Activated T-helper 1 cell treated with anti-CD3 and anti-CD28 coated beads, Interleukin-12 subunit alpha, Interleukin-12 subunit beta, Interleukin-2, Interleukin-4 antibody, amounts not matched to agents 30 ng/mL and 10 ng/mL and 1 ng/mL, durations not matched to agents 14 hours and 24 hours and 36 hours (primary cell): ENCODE measurements at regions of chr19 and their contacts with region 1.

Region 1: DNA sequence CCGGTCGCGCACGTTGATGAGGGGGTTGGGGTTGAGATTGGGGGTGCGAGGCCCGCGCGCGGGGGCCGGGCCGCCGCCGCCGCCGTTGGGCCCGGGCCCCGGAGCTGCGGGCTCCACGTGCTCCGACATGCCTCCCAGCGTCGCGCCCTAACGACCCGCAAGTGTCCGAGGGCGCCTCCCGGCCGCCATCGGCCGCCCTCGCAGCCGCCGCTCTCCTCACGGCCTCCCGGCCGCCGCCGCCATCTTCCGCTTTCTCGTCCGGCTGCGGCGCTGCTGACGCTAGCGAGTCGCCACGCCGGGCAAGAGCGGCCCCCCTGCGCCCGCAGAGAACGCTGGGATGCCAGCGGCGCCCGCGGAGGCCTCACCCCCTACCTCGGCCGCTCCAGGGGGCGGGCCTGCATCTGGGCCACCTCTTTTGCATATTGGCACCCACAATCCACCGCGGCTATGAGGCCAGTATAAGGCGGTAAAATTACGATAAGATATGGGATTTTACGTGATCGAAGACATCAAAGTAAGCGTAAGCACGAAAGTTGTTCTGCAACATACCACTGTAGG is at the start of gene TMEM259:
- DNase-seq: peak; percentile 96
- H3K4me3 Mint-ChIP-seq: peak within 1 kb of the TSS; percentile 95
- H3K27ac Mint-ChIP-seq: peak within 1 kb of the TSS; percentile 99
- H3K4me1 Mint-ChIP-seq: peaks cover 30% of the 10 kb centered on the region
- H3K27me3 Mint-ChIP-seq: peaks cover 2% of the 10 kb centered on the region
- total RNA-seq, gene TMEM259: 162 and 170 TPM in 2 replicates

Region 2: GRCh38 chr19:680287-681028 is 340.5 kb before region 1 on chr19:
- intact Hi-C with region 1: loop called (anchors 1 kb)
- DNase-seq: peak; percentile 95
- H3K4me3 Mint-ChIP-seq: peak overlapping the region; percentile 86
- H3K27ac Mint-ChIP-seq: peak overlapping the region; percentile 99
- H3K4me1 Mint-ChIP-seq: no peaks in the 10 kb centered on the region
- H3K27me3 Mint-ChIP-seq: peaks cover 5% of the 10 kb centered on the region

Region 3: DNA sequence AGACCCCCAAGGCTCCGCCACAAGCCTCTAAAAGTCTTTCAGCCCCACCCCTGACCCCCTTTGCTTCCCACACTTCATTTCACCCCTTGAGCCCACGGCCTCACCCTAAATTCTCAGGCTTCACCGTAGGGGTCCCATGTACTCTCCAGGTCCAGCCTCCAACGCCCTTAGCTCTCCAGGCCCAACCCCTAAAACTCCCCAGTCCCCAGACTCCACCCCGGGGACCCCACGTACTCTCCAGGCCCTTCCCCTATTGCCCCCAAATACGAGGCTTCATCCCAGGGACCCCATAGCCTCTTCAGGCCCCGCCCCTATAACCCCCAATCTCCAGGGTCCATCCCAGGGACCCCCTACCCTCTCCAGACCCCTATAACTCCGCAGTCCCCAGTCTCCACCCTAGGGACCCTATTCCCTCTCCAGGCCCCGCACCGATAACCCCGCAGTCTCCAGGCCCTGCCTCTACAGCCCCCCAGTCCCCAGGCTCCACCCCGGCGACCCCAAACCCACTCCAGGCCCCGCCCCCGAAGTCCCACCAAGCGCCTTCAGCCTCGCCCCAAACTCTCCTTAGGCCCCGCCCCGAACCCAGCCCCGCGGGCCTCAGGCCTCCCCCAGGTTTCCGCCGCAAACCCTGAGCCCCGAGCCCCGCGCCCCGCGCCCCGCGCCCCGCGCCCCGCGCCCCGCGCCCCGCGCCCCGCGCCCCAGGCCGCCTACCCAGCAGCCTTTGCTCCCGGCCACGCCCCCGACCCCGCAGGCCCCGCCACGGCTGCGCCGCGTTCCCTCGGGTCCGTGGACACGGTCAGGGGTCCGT is 128.5 kb before region 1 on chr19:
- intact Hi-C with region 1: loop called (anchors 1 kb)
- DNase-seq: no peak
- H3K4me3 Mint-ChIP-seq: peak overlapping the region; percentile 94
- H3K27ac Mint-ChIP-seq: peak overlapping the region; percentile 82
- H3K4me1 Mint-ChIP-seq: peaks cover 8% of the 10 kb centered on the region
- H3K27me3 Mint-ChIP-seq: no peaks in the 10 kb centered on the region

Region 4: GRCh38 chr19:1039646-1040475 is 18.9 kb after region 1 on chr19 and contains the start of gene ABCA7:
- intact Hi-C with region 1: loop called (anchors 1 kb)
- DNase-seq: peak; percentile 100
- H3K4me3 Mint-ChIP-seq: peak within 1 kb of the TSS; percentile 97
- H3K27ac Mint-ChIP-seq: peak within 1 kb of the TSS; percentile 86
- H3K4me1 Mint-ChIP-seq: peaks cover 51% of the 10 kb centered on the region
- H3K27me3 Mint-ChIP-seq: no peaks in the 10 kb centered on the region
- total RNA-seq, gene ABCA7: 15.8 and 18.3 TPM in 2 replicates

Region 5: DNA sequence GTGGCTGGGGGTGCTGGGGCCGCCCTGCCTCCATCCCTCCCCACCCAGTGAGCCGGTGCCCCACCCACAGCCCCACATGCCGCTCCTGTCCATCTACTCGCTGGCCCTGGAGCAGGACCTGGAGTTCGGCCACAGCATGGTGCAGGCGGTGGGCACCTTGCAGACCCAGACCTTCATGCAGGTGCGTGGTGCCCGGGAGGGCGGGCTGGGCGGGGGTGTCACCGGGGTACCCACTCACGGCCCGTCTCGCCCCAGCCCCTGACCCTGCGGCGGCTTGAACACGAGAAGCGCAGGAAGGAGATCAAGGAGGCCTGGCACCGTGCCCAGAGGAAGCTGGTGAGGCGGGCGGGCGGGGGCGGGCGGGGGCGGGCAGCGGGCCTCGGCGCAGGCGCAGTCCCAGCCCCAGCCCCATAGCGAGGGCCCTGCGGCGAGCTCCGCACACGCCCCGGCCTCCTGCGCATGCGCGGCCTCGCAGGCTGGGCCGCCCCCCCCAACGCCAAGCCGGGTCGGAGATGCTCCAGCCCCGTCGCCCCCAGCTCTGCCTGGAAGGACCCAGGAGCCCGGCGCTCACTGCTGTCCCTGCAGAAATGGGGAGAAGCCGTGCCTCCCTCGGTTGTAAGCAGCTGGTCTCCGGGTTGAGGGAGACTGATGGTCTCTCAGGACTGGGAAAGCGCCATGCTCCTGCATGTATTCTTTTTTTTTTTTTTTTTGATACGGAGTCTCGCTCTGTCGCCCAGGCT is 53.8 kb after region 1 on chr19:
- intact Hi-C with region 1: loop called (anchors 1 kb)
- DNase-seq: peak; percentile 69
- H3K4me3 Mint-ChIP-seq: peak overlapping the region; percentile 79
- H3K27ac Mint-ChIP-seq: peak overlapping the region; percentile 90
- H3K4me1 Mint-ChIP-seq: peaks cover 35% of the 10 kb centered on the region
- H3K27me3 Mint-ChIP-seq: no peaks in the 10 kb centered on the region

Region 6: DNA sequence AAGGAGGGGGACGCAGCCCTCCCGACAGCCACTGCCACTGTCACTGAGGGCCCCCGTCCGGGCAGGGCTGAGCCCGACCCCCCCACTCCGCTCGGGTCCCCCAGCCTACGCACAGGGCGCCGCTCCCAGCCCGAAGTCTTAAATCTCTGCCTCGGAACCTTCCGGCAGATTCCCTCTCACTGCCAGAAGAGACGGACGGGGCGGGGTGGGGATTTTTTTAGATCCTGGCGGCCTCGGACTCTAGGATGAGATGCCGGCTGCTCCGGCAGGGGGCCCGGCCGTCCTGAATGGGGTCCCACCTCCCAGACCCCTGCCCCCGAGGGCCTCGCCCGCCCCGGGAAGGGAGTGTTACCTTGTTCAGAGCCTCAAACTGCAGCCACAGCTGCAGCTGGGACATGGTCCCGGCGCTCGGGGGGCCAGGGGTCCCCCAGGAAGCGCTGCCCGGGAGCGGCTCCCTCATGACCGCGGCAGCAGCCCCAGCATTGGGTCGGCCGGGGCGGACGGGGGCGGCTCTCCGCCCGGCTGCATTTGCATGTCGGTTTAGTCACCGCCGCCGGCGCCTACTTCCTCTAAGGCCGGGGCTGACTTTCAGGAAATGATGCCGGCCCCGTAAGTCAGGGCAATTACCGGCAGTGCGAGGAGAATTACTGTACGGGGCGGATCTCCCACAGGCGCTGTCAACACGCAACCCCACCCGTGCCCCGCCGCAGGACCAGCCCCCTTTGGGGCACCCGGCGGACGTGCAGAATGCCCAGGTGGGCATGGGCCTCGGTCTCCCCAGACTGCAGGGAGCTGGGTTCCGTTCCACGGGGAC is 111.0 kb after region 1 on chr19:
- intact Hi-C with region 1: loop called (anchors 1 kb)
- DNase-seq: peak; percentile 88
- H3K4me3 Mint-ChIP-seq: peak overlapping the region; percentile 89
- H3K27ac Mint-ChIP-seq: peak overlapping the region; percentile 86
- H3K4me1 Mint-ChIP-seq: peaks cover 26% of the 10 kb centered on the region
- H3K27me3 Mint-ChIP-seq: no peaks in the 10 kb centered on the region

Region 7: DNA sequence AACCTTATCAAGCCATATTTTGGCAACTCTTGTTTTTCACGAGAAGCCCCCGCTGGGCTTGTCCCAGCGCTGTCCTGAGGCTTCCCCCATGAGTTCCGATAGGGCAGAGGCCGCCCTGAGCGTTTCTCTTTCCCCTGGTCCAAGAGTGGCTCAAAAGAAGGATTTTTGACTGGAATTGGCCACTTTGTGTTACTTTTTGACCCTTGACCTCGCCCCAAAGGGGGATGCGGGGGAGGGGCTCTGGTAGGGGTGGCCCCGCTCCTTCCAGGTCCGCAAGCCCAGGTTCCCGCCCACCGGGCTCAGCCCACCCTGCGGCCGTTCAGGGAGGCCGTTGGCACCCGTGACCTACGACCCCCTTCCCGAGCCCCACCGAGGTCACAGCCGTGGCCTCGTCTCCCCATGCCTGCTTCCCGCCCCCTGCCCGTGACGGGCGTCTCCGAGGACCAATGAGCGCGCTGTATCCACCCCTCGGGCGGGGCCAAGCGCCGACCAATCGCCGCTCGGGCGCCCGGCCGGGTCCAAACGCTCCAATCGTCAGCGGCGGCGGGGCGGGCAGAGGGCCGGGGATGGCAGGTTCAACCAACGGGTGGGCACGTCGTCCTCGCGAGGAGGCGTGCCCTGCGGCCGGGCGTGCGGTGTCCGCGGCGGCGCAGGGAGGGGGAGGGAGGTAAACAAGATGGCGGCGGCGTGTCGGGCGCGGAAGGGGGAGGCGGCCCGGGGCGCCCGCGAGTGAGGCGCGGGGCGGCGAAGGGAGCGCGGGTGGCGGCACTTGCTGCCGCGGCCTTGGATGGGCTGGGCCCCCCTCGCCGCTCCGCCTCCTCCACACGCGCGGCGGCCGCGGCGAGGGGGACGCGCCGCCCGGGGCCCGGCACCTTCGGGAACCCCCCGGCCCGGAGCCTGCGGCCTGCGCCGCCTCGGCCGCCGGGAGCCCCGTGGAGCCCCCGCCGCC is 184.4 kb after region 1 on chr19 and contains the start of gene STK11:
- intact Hi-C with region 1: loop called (anchors 1 kb)
- DNase-seq: peak; percentile 99
- H3K4me3 Mint-ChIP-seq: peak within 1 kb of the TSS; percentile 95
- H3K27ac Mint-ChIP-seq: peak within 1 kb of the TSS; percentile 93
- H3K4me1 Mint-ChIP-seq: peaks cover 14% of the 10 kb centered on the region
- H3K27me3 Mint-ChIP-seq: no peaks in the 10 kb centered on the region
- total RNA-seq, gene STK11: 69.6 and 71.3 TPM in 2 replicates

Region 8: GRCh38 chr19:1425102-1425837 is 404.3 kb after region 1 on chr19:
- intact Hi-C with region 1: no loop called
- DNase-seq: no peak
- H3K4me3 Mint-ChIP-seq: no peak overlapping the region
- H3K27ac Mint-ChIP-seq: no peak overlapping the region
- H3K4me1 Mint-ChIP-seq: no peaks in the 10 kb centered on the region
- H3K27me3 Mint-ChIP-seq: no peaks in the 10 kb centered on the region